ENCODE measurements at regions of chr5 and their contacts with region 1.

Region 1: GRCh38 chr5:138337685-138338410 is at the start of gene FAM53C:
- DNase-seq: peak; percentile 88 to 96 (median 93)
- H3K4me3 ChIP-seq: peak within 1 kb of the TSS; percentile 74 to 85
- H3K4me3 Mint-ChIP-seq: peak within 1 kb of the TSS; percentile 90 to 95 (median 92)
- H3K27ac ChIP-seq: peak within 1 kb of the TSS; percentile 92
- H3K27ac Mint-ChIP-seq: peak within 1 kb of the TSS; percentile 98 to 100 (median 99)
- H3K4me1 ChIP-seq: peaks cover 29% of the 10 kb centered on the region
- H3K4me1 Mint-ChIP-seq: peaks cover 20 to 48% (median 34%) of the 10 kb centered on the region in 4 donors
- H3K27me3 ChIP-seq: no peaks in the 10 kb centered on the region
- H3K27me3 Mint-ChIP-seq: no peaks in the 10 kb centered on the region
- total RNA-seq, gene FAM53C: 19.3 to 20.4 TPM

Region 2: GRCh38 chr5:138096363-138096762 is 241.5 kb before region 1 on chr5:
- CTCF ChIA-PET with region 1: no interaction called
- POLR2A ChIA-PET with region 1: no interaction called
- intact Hi-C with region 1: no loop called
- DNase-seq: no peak
- H3K4me3 ChIP-seq: no peak overlapping the region
- H3K4me3 Mint-ChIP-seq: no peak overlapping the region
- H3K27ac ChIP-seq: no peak overlapping the region
- H3K27ac Mint-ChIP-seq: peak overlapping the region in 1 of 7 donors; percentile 11
- H3K4me1 ChIP-seq: no peaks in the 10 kb centered on the region
- H3K4me1 Mint-ChIP-seq: peaks cover 6 to 9% (median 7%) of the 10 kb centered on the region in 4 donors
- H3K27me3 ChIP-seq: no peaks in the 10 kb centered on the region
- H3K27me3 Mint-ChIP-seq: peaks cover 10% of the 10 kb centered on the region in 2 donors

Region 3: GRCh38 chr5:138178516-138179276 is 159.2 kb before region 1 on chr5 and contains the starts of genes BRD8 and KIF20A:
- CTCF ChIA-PET with region 1: no interaction called
- POLR2A ChIA-PET with region 1: interaction called, 6 read pairs
- intact Hi-C with region 1: loop called (anchors 5 kb)
- DNase-seq: peak; percentile 85 to 92 (median 88)
- H3K4me3 ChIP-seq: peak within 1 kb of the TSS; percentile 80 to 93
- H3K4me3 Mint-ChIP-seq: peak within 1 kb of the TSS in 1 of 8 donors; percentile 9
- H3K27ac ChIP-seq: peak within 1 kb of the TSS; percentile 72
- H3K27ac Mint-ChIP-seq: peak within 1 kb of the TSS in 2 of 7 donors; percentile 16 to 55
- H3K4me1 ChIP-seq: peaks cover 17% of the 10 kb centered on the region
- H3K4me1 Mint-ChIP-seq: peaks cover 4 to 17% (median 11%) of the 10 kb centered on the region in 4 donors
- H3K27me3 ChIP-seq: no peaks in the 10 kb centered on the region
- H3K27me3 Mint-ChIP-seq: no peaks in the 10 kb centered on the region
- total RNA-seq, gene BRD8: 93.7 to 97.3 TPM
- total RNA-seq, gene KIF20A: not detected

Region 4: DNA sequence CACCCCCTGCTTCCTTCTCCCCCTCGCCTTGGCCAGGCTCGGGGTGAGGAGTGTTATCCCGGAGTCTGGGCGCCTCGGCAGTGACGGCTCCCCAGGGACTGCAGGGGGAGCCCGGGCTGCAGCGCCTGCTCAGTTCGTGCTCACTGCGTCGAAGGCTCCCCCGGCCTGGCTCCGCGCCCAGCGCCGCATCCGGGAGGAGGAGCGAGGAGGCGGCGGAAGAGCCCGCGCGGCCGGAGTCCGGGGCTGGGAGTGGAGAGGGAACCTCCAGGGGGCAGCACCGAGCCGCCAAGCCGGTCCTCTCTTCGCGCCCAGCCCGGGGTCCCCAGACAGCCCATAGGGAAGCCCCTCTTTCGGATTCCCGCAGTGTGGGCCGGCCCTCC is 126.2 kb after region 1 on chr5:
- CTCF ChIA-PET with region 1: no interaction called
- POLR2A ChIA-PET with region 1: interaction called, 8 read pairs
- intact Hi-C with region 1: loop called (anchors 1 kb)
- DNase-seq: peak; percentile 91 to 95 (median 94)
- H3K4me3 ChIP-seq: peak overlapping the region; percentile 79 to 85
- H3K4me3 Mint-ChIP-seq: peak overlapping the region; percentile 85 to 97 (median 90)
- H3K27ac ChIP-seq: peak overlapping the region; percentile 90
- H3K27ac Mint-ChIP-seq: peak overlapping the region; percentile 89 to 96 (median 93)
- H3K4me1 ChIP-seq: peaks cover 46% of the 10 kb centered on the region
- H3K4me1 Mint-ChIP-seq: peaks cover 27 to 65% (median 39%) of the 10 kb centered on the region in 4 donors
- H3K27me3 ChIP-seq: no peaks in the 10 kb centered on the region
- H3K27me3 Mint-ChIP-seq: no peaks in the 10 kb centered on the region